HCT116 (cell line): ENCODE measurements at regions of chr9 and their contacts with region 1.

Region 1: GRCh38 chr9:108953983-108954574 is 19.9 kb downstream of the ABITRAM start:
- DNase-seq: peak; percentile 37
- ATAC-seq: no peak
- H3K4me3 ChIP-seq: no peak overlapping the region
- H3K27ac ChIP-seq: no peak overlapping the region
- H3K4me1 ChIP-seq: no peaks in the 10 kb centered on the region
- H3K27me3 ChIP-seq: no peaks in the 10 kb centered on the region
- CTCF ChIP-seq: peak; percentile 33 to 62 (median 58); a peak in 5 of 6 replicates
- POLR2A ChIP-seq: no peak
- RAD21 ChIP-seq: peak; percentile 57

Region 2: GRCh38 chr9:108850293-108850897 is 103.7 kb before region 1 on chr9:
- CTCF ChIA-PET with region 1: interaction called, 8 read pairs
- POLR2A ChIA-PET with region 1: no interaction called
- RAD21 ChIA-PET with region 1: no interaction called
- intact Hi-C with region 1: loop called (anchors 1 kb)
- DNase-seq: peak; percentile 10
- ATAC-seq: peak; percentile 67
- H3K4me3 ChIP-seq: no peak overlapping the region
- H3K27ac ChIP-seq: no peak overlapping the region
- H3K4me1 ChIP-seq: no peaks in the 10 kb centered on the region
- H3K27me3 ChIP-seq: no peaks in the 10 kb centered on the region
- CTCF ChIP-seq: peak; percentile 39 to 50 (median 44); a peak in 3 of 6 replicates
- POLR2A ChIP-seq: no peak
- RAD21 ChIP-seq: peak; percentile 77

Region 3: DNA sequence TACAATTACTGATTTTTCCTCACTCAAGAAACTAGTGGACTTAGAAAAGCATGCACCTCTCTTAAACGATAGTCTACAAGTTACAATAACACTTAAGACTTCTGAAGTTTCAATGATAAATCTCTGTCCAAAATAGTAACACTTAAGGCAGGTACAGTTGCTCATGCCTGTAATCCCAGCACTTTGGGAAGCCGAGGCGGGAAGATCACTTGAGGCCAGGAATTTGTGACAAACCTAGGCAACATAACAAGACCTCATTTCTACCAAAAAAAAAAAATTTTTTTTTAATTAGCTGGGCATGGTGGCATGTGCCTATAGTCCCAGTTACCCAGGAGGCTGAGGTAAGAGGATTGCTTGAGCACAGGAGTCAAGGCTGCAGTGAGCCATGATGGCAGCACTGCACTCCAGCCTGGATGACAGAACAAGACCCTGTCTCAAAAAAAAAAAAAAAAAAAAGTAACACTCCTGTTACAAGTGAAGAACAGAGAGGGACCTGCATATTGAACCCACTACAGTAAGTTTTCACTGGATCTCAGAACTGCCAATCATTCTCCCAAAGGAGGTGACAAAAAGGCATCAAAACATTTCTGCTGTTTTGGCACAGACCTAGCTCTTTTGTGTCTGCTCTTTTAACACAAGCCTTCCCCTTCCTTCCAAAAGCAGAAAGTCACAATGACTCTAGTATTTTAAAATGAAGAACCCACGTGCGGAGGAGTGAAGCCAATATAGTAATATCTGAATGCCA is 16.3 kb before region 1 on chr9:
- CTCF ChIA-PET with region 1: interaction called, 11 read pairs
- POLR2A ChIA-PET with region 1: no interaction called
- RAD21 ChIA-PET with region 1: no interaction called
- intact Hi-C with region 1: no loop called
- DNase-seq: no peak
- ATAC-seq: no peak
- H3K4me3 ChIP-seq: no peak overlapping the region
- H3K27ac ChIP-seq: no peak overlapping the region
- H3K4me1 ChIP-seq: peaks cover 3 to 11% of the 10 kb centered on the region in 2 experiments; a peak in 3 of 4 replicates
- H3K27me3 ChIP-seq: no peaks in the 10 kb centered on the region
- CTCF ChIP-seq: no peak
- POLR2A ChIP-seq: no peak
- RAD21 ChIP-seq: no peak

Region 4: GRCh38 chr9:110256380-110257096 is 1302.5 kb after region 1 on chr9 and contains the start of gene TXN:
- CTCF ChIA-PET with region 1: no interaction called
- POLR2A ChIA-PET with region 1: no interaction called
- RAD21 ChIA-PET with region 1: no interaction called
- intact Hi-C with region 1: loop called (anchors 5 kb)
- DNase-seq: peak; percentile 51
- ATAC-seq: peak; percentile 83
- H3K4me3 ChIP-seq: peak within 1 kb of the TSS; percentile 76 to 86
- H3K27ac ChIP-seq: peak within 1 kb of the TSS; percentile 74
- H3K4me1 ChIP-seq: peaks cover 8 to 57% of the 10 kb centered on the region in 2 experiments
- H3K27me3 ChIP-seq: no peaks in the 10 kb centered on the region
- CTCF ChIP-seq: no peak
- POLR2A ChIP-seq: peak; percentile 99
- RAD21 ChIP-seq: no peak
- total RNA-seq, gene TXN: 421 TPM